ENCODE measurements at regions of chr4 and their contacts with region 1.

Region 1: GRCh38 chr4:177047070-177047850 is 254.5 kb upstream of the VEGFC start:
- DNase-seq: no peak
- ATAC-seq: peak; percentile 78

Region 2: GRCh38 chr4:176377780-176378179 is 669.5 kb before region 1 on chr4:
- intact Hi-C with region 1: loop called (anchors 1 kb)
- DNase-seq: no peak
- ATAC-seq: no peak

Region 3: DNA sequence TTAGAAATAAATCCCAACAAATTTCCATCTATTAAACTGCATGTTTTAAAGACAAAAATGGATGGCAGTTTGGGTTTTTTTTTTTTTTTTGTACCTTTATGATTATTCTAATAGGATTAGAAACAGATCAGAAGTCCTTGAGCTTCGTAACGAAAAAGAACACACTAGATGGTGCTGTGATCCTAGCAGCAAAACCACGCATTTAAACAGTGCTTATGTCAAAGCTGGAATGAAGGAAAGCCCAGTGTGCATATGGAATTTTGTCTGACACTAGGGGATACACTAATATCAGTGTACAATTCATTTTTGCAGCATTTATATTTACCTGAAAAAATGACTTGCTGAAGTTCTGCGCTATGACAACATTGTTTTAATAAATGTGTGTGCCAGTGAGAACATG is 483.7 kb before region 1 on chr4:
- intact Hi-C with region 1: loop called (anchors 5 kb)
- DNase-seq: no peak
- ATAC-seq: no peak

Region 4: GRCh38 chr4:178003098-178003657 is 955.9 kb after region 1 on chr4:
- intact Hi-C with region 1: no loop called
- DNase-seq: no peak
- ATAC-seq: no peak